Calu3 (cell line): ENCODE measurements at regions of chr16 and their contacts with region 1.

Region 1: GRCh38 chr16:77183137-77183536 is 7.9 kb upstream of the MON1B start:
- DNase-seq: no peak
- H3K4me3 Mint-ChIP-seq: no peak overlapping the region
- H3K27ac Mint-ChIP-seq: no peak overlapping the region
- H3K4me1 Mint-ChIP-seq: no peaks in the 10 kb centered on the region
- H3K27me3 Mint-ChIP-seq: no peaks in the 10 kb centered on the region
- CTCF ChIP-seq: no peak

Region 2: GRCh38 chr16:75432828-75433731 is 1750.1 kb before region 1 on chr16 and contains the start of gene CFDP1:
- CTCF ChIA-PET with region 1: no interaction called
- intact Hi-C with region 1: loop called (anchors 10 kb)
- DNase-seq: peak; percentile 97
- H3K4me3 Mint-ChIP-seq: peak within 1 kb of the TSS; percentile 85
- H3K27ac Mint-ChIP-seq: peak within 1 kb of the TSS; percentile 91
- H3K4me1 Mint-ChIP-seq: peaks cover 24% of the 10 kb centered on the region
- H3K27me3 Mint-ChIP-seq: no peaks in the 10 kb centered on the region
- CTCF ChIP-seq: no peak
- total RNA-seq, gene CFDP1: 64.1 and 70.9 TPM in 2 replicates

Region 3: DNA sequence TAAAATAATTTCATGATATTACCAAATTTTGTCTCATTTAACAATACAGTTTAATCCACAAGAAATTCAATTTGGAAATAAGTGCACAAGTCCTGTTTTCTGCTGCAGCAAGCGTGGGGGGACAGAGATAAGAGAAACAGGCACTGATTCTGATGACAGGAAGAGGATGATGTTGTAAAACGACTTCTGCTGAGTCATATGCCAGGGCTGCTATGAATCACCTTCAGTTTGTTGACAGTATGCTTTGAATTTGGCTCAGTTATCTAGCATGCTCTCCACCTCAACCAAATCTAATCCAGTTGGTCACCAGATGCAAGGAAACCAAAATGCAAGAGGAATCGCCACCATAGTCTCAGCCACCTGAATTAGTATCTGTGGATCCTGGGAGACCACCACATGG is 236.3 kb before region 1 on chr16:
- CTCF ChIA-PET with region 1: no interaction called
- intact Hi-C with region 1: no loop called
- DNase-seq: peak; percentile 23
- H3K4me3 Mint-ChIP-seq: no peak overlapping the region
- H3K27ac Mint-ChIP-seq: no peak overlapping the region
- H3K4me1 Mint-ChIP-seq: peaks cover 15% of the 10 kb centered on the region
- H3K27me3 Mint-ChIP-seq: no peaks in the 10 kb centered on the region
- CTCF ChIP-seq: no peak